H1 (cell line): ENCODE measurements at regions of chr6 and their contacts with region 1.

Region 1: GRCh38 chr6:65650086-65650485 is 56.9 kb downstream of the EYS start:
- DNase-seq: no peak
- H3K4me3 ChIP-seq: no peak overlapping the region
- H3K27ac ChIP-seq: no peak overlapping the region
- H3K4me1 ChIP-seq: no peaks in the 10 kb centered on the region
- H3K27me3 ChIP-seq: no peaks in the 10 kb centered on the region
- CTCF ChIP-seq: no peak
- EP300 ChIP-seq: no peak
- POLR2A ChIP-seq: no peak
- RAD21 ChIP-seq: no peak

Region 2: GRCh38 chr6:65638047-65638842 is 11.8 kb before region 1 on chr6:
- CTCF ChIA-PET with region 1: interaction called, 14 read pairs
- POLR2A ChIA-PET with region 1: no interaction called
- DNase-seq: peak in 1 of 2 experiments; percentile 70
- H3K4me3 ChIP-seq: no peak overlapping the region
- H3K27ac ChIP-seq: no peak overlapping the region
- H3K4me1 ChIP-seq: no peaks in the 10 kb centered on the region; a peak in 1 of 7 replicates
- H3K27me3 ChIP-seq: no peaks in the 10 kb centered on the region
- CTCF ChIP-seq: peak in 2 of 3 experiments; percentile 34 to 70
- EP300 ChIP-seq: no peak
- POLR2A ChIP-seq: no peak
- RAD21 ChIP-seq: peak; percentile 64 to 68